Spleen (tissue), 13 donors: ENCODE measurements at regions of chr2 and their contacts with region 1.

Region 1: DNA sequence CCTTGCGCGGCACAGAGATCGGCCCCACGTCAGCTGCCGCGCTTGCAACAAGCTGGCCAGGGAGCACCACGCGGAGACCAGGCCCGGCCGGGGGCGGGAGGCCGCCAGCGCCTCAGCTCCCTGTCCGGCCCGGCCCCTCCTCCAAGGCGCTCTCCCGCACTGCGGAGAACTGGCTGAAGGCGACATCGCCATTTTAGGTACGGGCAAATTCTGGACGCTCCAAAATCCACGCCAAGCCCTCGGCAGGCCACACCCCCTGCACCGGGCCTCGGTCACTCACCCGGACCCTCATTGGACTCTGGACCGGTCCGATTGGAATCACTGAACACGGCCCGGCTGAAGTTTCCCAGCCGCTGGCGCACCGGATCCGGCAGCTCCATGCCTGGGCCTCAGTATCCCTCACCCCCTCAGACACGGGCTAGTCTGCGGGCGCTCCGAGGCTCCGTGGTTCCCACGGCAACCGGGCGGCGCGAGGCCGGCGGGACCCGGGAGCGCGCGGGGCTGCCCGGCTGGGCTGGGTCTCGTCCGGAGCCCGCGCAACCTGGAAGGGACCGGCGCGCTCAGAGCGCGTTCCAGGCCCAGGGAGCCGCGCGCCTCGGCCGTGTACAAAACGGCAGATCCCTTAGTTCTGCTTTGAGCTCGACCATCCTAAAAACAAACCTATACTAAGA is at the start of gene TMEM17:
- DNase-seq: peak; percentile 90
- H3K4me3 ChIP-seq: peak within 1 kb of the TSS; percentile 68 to 96 (median 77)
- H3K27ac ChIP-seq: peak within 1 kb of the TSS; percentile 54 to 88 (median 84)
- H3K4me1 ChIP-seq: peaks cover 4 to 21% (median 11%) of the 10 kb centered on the region in 6 donors
- H3K27me3 ChIP-seq: peaks cover 0 to 11% (median 0%) of the 10 kb centered on the region in 7 donors
- CTCF ChIP-seq: no peak
- POLR2A ChIP-seq: no peak
- total RNA-seq, gene TMEM17: 0.51 to 2.6 (median 0.98) TPM in 6 of 7 donors, not detected in the other

Region 2: DNA sequence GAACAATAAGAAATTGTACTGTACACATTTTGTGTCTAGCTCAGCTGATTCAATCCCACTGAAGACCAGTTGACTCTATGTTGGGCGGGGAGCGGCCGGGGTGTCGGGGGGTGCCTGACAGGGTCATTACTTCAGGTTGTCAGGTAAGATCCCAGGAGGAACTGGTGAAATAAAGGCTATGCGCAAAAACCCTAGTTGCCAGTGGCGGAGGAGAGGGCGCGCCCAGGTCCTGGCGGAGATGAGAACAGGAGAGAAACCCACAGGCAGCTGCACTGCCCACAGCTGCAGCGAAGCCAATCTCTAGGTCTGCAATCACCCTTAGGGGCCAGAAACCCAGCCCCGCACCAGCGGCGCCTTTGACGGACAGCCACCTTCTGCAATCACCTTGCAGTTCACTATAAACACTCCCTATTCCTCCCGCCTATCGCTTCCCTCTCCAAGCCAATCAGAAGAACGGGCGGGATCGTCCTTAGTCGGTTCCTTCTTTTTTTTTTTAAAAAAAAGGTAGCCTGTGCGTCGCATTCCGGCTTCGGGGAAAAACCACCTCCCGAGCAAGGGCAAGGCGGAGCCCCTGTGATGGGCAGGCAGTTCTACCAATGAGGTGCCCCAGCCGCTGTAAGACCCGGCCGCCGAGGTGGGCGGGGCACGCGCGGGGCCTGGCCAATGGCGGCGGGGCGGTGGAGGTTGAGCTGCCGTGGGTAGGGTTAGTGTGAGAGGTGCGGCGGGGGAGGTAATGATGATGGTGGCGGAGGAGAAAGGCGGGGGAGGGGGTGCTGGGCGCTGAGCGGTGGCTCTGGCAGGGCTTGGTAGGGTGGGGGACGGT is 199.3 kb after region 1 on chr2 and contains the start of gene EHBP1:
- intact Hi-C with region 1: loop called (anchors 5 kb)
- DNase-seq: peak; percentile 99
- H3K4me3 ChIP-seq: peak within 1 kb of the TSS; percentile 71 to 96 (median 87)
- H3K27ac ChIP-seq: peak within 1 kb of the TSS; percentile 58 to 92 (median 88)
- H3K4me1 ChIP-seq: peaks cover 0 to 47% (median 28%) of the 10 kb centered on the region in 6 donors
- H3K27me3 ChIP-seq: no peaks in the 10 kb centered on the region
- CTCF ChIP-seq: peak in 2 of 11 experiments; percentile 25 to 38
- POLR2A ChIP-seq: peak in 2 of 3 donors; percentile 50 to 90
- total RNA-seq, gene EHBP1: 23.6 to 44.2 (median 34.2) TPM